Activated CD4-positive, alpha-beta T cell treated with anti-CD3 and anti-CD28 coated beads for 36 hours (primary cell): ENCODE measurements at regions of chr16 and their contacts with region 1.

Region 1: DNA sequence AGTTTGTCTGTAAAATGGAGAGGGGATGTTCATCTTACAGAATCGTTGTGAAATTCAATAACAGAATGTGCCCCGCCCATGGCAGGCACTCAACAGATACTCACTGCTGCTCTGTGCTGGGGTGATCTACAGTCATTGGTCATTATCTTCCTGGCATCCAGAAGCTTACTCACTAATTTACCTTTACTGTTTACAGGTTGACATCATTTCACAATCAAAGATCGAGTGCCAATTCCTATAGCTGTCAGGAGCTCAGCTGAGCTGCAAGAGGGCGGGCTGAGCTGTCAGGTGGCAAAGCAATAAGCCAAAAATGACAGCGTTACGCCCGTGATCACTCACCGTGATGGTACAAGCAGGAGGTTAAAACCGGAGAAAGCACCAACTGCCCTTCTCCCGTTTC is 51.2 kb downstream of the LITAF start:
- DNase-seq: no peak
- ATAC-seq: no peak
- H3K4me3 Mint-ChIP-seq: no peak overlapping the region
- H3K27ac Mint-ChIP-seq: no peak overlapping the region
- H3K4me1 Mint-ChIP-seq: peaks cover 11% of the 10 kb centered on the region
- H3K27me3 Mint-ChIP-seq: no peaks in the 10 kb centered on the region

Region 2: GRCh38 chr16:10646581-10647263 is 888.7 kb before region 1 on chr16:
- CTCF ChIA-PET with region 1: no interaction called
- POLR2A ChIA-PET with region 1: no interaction called
- intact Hi-C with region 1: no loop called
- DNase-seq: no peak
- ATAC-seq: no peak
- H3K4me3 Mint-ChIP-seq: no peak overlapping the region
- H3K27ac Mint-ChIP-seq: no peak overlapping the region
- H3K4me1 Mint-ChIP-seq: no peaks in the 10 kb centered on the region
- H3K27me3 Mint-ChIP-seq: no peaks in the 10 kb centered on the region

Region 3: GRCh38 chr16:11515540-11516430 is 19.7 kb before region 1 on chr16:
- CTCF ChIA-PET with region 1: interaction called, 16 read pairs
- POLR2A ChIA-PET with region 1: no interaction called
- intact Hi-C with region 1: no loop called
- DNase-seq: no peak
- ATAC-seq: no peak
- H3K4me3 Mint-ChIP-seq: no peak overlapping the region
- H3K27ac Mint-ChIP-seq: no peak overlapping the region
- H3K4me1 Mint-ChIP-seq: no peaks in the 10 kb centered on the region
- H3K27me3 Mint-ChIP-seq: no peaks in the 10 kb centered on the region

Region 4: DNA sequence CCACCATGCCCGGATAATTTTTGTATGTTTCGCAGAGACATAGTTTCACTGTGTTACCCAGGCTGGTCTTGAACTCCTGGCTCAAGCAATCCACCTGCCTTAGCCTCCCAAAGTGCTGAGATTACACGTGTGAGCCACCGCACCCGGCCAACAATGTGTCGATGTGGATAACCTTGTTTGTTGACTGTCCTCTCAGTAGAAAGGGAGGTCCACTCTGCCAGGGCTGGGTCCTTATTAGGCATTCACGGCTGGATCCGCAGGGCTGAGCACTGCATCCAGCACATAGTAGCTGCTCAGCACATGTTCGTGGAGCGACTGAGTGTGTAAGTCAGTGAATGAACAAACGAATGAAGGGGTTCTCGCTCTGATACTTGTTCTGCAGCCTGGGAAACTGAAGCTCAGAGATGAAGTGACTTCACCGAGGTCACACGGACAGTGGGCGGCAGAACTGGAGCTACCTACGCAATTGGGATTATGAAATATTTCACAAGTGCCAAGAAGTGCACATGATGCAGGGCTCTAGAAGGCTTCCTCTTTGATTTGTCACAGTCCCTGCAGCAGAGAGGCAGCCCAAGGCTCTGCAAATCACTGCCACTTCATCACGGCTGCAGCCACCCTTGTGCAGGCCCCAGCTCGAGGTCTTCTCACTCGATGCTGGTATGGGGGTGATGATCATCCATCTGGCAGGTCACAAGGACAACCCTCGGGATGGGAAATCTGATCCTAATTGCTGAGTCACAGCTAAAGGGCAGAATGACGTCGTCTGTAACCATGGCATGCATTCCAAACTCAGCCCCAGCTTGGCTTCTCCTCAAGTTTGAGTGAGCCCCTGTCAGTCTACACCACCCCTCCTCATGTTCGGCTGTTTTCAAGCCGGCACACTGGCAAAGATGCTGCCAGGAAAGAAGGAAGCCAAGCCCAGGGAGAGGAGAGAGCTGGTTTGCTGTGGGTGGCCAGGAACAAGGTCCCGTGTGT is 104.7 kb after region 1 on chr16:
- CTCF ChIA-PET with region 1: interaction called, 51 read pairs
- POLR2A ChIA-PET with region 1: interaction called, 3 read pairs
- intact Hi-C with region 1: loop called (anchors 1 kb)
- DNase-seq: no peak
- ATAC-seq: no peak
- H3K4me3 Mint-ChIP-seq: no peak overlapping the region
- H3K27ac Mint-ChIP-seq: no peak overlapping the region
- H3K4me1 Mint-ChIP-seq: peaks cover 8% of the 10 kb centered on the region
- H3K27me3 Mint-ChIP-seq: no peaks in the 10 kb centered on the region

Region 5: GRCh38 chr16:11667824-11668622 is 132.6 kb after region 1 on chr16 and contains the start of gene SNN:
- CTCF ChIA-PET with region 1: interaction called, 4 read pairs
- POLR2A ChIA-PET with region 1: no interaction called
- intact Hi-C with region 1: loop called in 1 of 2 experiments (anchors 1 kb)
- DNase-seq: peak; percentile 93
- ATAC-seq: peak; percentile 90
- H3K4me3 Mint-ChIP-seq: peak within 1 kb of the TSS; percentile 72
- H3K27ac Mint-ChIP-seq: no peak within 1 kb of the TSS
- H3K4me1 Mint-ChIP-seq: peaks cover 73% of the 10 kb centered on the region
- H3K27me3 Mint-ChIP-seq: no peaks in the 10 kb centered on the region
- total RNA-seq, gene SNN: 6.0 to 7.2 TPM

Region 6: DNA sequence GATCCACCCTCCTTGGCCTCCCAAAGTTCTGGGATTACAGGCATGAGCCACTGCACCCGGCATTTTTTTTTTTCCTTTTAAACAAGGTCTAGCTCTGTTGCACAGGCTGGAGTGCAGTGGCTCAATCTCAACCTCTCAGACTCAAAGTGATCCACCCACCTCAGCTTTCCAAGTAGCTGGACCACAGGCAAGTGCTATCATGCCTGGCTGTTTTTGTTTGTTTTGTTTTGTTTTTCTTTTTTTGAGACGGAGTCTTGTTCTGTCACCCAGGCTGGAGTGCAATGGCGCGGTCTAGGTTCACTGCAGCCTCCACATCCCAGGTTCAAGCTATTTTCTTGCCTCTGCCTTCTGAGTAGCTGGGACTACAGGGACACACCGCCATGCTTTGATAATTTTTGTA is 280.6 kb after region 1 on chr16:
- CTCF ChIA-PET with region 1: interaction called, 8 read pairs
- POLR2A ChIA-PET with region 1: no interaction called
- intact Hi-C with region 1: loop called in 1 of 2 experiments (anchors 1 kb)
- DNase-seq: no peak
- ATAC-seq: no peak
- H3K4me3 Mint-ChIP-seq: no peak overlapping the region
- H3K27ac Mint-ChIP-seq: no peak overlapping the region
- H3K4me1 Mint-ChIP-seq: no peaks in the 10 kb centered on the region
- H3K27me3 Mint-ChIP-seq: no peaks in the 10 kb centered on the region

Region 7: DNA sequence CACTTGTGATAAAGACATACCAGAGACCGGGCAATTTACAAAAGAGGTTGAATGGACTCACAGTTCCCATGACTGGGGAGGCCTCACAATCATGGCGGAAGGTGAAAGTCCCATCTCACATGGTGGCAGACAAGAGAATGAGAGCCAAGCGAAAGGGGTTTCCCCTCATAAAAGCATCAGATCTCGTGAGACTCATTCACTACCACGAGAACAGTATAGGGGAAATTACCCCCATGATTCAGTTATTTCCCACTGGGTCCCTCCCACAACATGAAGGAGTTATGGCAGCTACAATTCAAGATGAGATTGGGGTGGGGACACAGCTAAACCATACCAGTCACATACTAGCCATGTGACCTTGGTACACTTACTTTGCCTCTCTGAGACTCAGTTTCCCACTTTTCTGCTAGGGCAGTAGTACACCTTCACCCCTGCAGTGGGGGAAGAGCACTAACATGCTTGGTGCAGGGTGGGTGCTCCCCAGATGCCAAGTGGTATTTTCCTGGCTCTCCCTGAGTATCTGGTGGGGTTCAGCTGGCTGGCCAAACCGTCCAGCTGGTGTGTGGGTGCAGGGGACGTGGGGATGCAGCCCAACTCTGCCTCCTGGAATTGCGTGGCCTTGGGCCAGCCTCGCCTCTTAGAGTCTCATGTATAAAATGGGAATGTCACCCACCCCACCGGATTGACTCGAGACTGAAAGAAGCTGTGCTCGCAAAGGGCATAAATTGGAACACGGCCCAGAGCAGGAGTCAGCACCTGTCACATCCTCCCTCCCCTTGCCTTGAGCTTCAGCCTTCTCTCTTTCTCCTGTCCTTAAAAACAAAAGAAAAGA is 904.1 kb after region 1 on chr16:
- CTCF ChIA-PET with region 1: no interaction called
- POLR2A ChIA-PET with region 1: no interaction called
- intact Hi-C with region 1: no loop called
- DNase-seq: peak; percentile 42
- ATAC-seq: peak; percentile 49
- H3K4me3 Mint-ChIP-seq: no peak overlapping the region
- H3K27ac Mint-ChIP-seq: peak overlapping the region; percentile 26
- H3K4me1 Mint-ChIP-seq: peaks cover 16% of the 10 kb centered on the region
- H3K27me3 Mint-ChIP-seq: no peaks in the 10 kb centered on the region